ENCODE measurements at regions of chr1 and their contacts with region 1.

Region 1: GRCh38 chr1:200802865-200803512 is 64.3 kb downstream of the CAMSAP2 start:
- DNase-seq: peak; percentile 34 to 75 (median 61)
- ATAC-seq: peak; percentile 93
- H3K4me3 ChIP-seq: no peak overlapping the region
- H3K4me3 Mint-ChIP-seq: no peak overlapping the region
- H3K27ac ChIP-seq: no peak overlapping the region
- H3K27ac Mint-ChIP-seq: peak overlapping the region in 1 of 9 donors; percentile 10
- H3K4me1 ChIP-seq: no peaks in the 10 kb centered on the region
- H3K4me1 Mint-ChIP-seq: peaks cover 0 to 10% (median 4%) of the 10 kb centered on the region in 7 donors
- H3K27me3 ChIP-seq: no peaks in the 10 kb centered on the region
- H3K27me3 Mint-ChIP-seq: peaks cover 0 to 31% (median 0%) of the 10 kb centered on the region in 5 donors

Region 2: DNA sequence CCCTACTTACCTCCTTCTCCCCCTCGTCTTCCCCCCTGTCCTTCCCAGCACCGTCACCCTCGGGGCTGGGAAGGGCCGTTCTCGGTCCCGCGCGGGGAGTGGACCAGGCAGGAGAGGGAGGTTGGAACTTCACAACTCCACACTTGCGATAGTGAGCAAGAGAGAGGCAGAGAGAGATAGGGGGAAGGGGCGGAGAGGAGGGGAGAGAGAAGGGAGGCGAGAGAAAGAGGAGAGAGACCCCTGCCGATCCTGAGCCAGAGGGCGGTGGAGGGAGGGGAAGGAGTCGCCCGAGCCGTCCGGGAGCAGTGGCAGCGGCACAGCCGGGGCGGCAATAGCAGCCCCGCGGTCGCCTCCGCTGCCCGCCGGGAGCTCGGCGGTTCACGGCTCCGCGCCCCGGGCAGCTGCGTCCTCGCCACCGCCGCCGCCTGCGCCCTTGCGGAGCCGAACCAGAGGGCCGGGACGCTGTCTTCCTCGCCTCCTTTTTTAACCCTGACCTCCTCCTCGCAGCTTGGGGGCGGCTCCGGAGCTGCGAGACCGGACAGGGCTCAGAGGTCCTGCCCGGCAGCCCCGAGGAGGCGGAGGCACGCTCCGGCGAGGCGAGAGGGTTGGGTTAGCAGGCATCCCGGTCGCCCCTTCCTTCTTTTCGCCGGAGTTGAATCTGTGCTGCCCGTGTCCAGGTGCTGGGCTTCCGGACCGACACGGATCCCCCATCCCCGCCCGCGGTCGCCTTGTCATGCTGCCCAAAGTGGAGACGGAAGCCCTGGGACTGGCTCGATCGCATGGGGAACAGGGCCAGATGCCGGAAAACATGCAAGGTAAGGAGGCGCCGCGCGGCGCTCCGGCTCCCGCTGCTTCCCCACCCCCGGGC is 763.8 kb before region 1 on chr1:
- CTCF ChIA-PET with region 1: no interaction called
- POLR2A ChIA-PET with region 1: no interaction called
- intact Hi-C with region 1: no loop called
- DNase-seq: peak in 1 of 9 donors; percentile 38
- ATAC-seq: peak; percentile 57
- H3K4me3 ChIP-seq: peak overlapping the region; percentile 46
- H3K4me3 Mint-ChIP-seq: peak overlapping the region in 9 of 10 donors; percentile 59 to 82 (median 70)
- H3K27ac ChIP-seq: no peak overlapping the region
- H3K27ac Mint-ChIP-seq: peak overlapping the region in 1 of 9 donors; percentile 69
- H3K4me1 ChIP-seq: peaks cover 4 to 24% of the 10 kb centered on the region in 2 donors
- H3K4me1 Mint-ChIP-seq: peaks cover 20 to 50% (median 38%) of the 10 kb centered on the region in 7 donors
- H3K27me3 ChIP-seq: peaks cover 9 to 39% of the 10 kb centered on the region in 2 donors
- H3K27me3 Mint-ChIP-seq: peaks cover 37 to 71% (median 44%) of the 10 kb centered on the region in 5 donors

Region 3: DNA sequence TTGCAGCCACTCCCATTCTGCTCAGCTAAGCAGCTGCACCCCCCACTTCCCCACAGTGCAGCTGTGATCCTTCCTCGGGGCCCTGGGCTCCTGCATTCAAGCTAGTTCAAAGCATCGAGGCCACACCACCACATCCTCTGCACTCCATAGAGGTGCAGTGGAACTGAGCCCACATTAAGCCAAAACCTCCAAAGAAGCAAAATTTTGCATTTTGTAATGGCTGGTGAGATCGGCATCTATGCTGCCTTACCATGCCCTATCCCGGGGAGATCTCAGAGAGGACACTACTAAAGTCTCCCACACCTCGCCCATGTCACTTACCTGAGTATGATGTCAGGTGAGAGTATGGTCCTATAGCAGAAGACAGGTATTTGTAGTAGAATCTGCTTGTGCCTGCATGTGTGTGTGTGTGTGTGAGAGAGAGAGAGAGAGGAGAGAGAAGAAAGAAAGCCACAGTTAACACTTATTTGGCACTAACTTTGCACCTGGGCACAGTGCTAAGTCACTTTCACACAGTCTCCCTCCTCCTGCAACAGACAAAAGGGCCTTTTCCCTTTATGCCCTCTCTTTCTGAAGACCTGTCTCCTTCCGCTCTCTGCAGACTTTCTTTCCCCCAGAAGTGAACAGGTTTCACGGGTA is 272.2 kb before region 1 on chr1:
- CTCF ChIA-PET with region 1: no interaction called
- POLR2A ChIA-PET with region 1: no interaction called
- intact Hi-C with region 1: loop called in 1 of 2 experiments (anchors 1 kb)
- DNase-seq: peak; percentile 22 to 87 (median 79)
- ATAC-seq: peak; percentile 97
- H3K4me3 ChIP-seq: peak overlapping the region; percentile 29
- H3K4me3 Mint-ChIP-seq: peak overlapping the region; percentile 41 to 86 (median 78)
- H3K27ac ChIP-seq: peak overlapping the region; percentile 62
- H3K27ac Mint-ChIP-seq: peak overlapping the region; percentile 71 to 92 (median 86)
- H3K4me1 ChIP-seq: peaks cover 16 to 34% of the 10 kb centered on the region in 2 donors
- H3K4me1 Mint-ChIP-seq: peaks cover 16 to 61% (median 53%) of the 10 kb centered on the region in 7 donors
- H3K27me3 ChIP-seq: no peaks in the 10 kb centered on the region
- H3K27me3 Mint-ChIP-seq: no peaks in the 10 kb centered on the region

Region 4: DNA sequence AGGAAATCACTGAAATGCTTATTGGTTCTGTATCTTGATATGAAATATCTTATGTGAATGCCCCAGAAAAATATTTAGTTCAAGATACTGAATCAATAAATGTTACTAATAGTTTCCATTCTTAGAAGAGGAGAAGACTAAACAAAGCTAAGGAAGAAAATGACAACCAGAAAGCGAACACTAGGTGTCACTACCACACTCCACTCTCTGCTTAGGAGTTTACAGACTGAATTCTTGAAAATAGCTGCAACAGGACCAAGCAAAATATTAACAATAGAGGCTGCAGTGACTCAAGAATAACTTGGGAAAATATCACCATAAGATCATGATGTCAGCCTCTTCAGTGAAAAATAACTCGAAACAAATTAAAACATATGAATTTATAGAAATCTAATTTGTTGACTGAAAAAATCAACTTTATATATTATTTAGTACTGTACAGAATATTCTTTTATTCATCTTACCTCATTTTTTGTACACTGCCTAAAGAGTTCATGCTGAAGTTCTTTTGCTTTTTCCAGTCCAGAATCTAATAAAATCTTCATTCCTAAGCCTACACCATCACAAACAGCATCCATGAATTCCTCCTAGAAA is 244.0 kb before region 1 on chr1:
- CTCF ChIA-PET with region 1: interaction called, 7 read pairs
- POLR2A ChIA-PET with region 1: interaction called, 3 read pairs
- intact Hi-C with region 1: loop called (anchors 1 kb)
- DNase-seq: peak in 4 of 9 donors; percentile 10 to 26 (median 18)
- ATAC-seq: peak; percentile 48
- H3K4me3 ChIP-seq: no peak overlapping the region
- H3K4me3 Mint-ChIP-seq: no peak overlapping the region
- H3K27ac ChIP-seq: no peak overlapping the region
- H3K27ac Mint-ChIP-seq: no peak overlapping the region
- H3K4me1 ChIP-seq: no peaks in the 10 kb centered on the region
- H3K4me1 Mint-ChIP-seq: peaks cover 0 to 17% (median 6%) of the 10 kb centered on the region in 7 donors
- H3K27me3 ChIP-seq: no peaks in the 10 kb centered on the region
- H3K27me3 Mint-ChIP-seq: no peaks in the 10 kb centered on the region

Region 5: DNA sequence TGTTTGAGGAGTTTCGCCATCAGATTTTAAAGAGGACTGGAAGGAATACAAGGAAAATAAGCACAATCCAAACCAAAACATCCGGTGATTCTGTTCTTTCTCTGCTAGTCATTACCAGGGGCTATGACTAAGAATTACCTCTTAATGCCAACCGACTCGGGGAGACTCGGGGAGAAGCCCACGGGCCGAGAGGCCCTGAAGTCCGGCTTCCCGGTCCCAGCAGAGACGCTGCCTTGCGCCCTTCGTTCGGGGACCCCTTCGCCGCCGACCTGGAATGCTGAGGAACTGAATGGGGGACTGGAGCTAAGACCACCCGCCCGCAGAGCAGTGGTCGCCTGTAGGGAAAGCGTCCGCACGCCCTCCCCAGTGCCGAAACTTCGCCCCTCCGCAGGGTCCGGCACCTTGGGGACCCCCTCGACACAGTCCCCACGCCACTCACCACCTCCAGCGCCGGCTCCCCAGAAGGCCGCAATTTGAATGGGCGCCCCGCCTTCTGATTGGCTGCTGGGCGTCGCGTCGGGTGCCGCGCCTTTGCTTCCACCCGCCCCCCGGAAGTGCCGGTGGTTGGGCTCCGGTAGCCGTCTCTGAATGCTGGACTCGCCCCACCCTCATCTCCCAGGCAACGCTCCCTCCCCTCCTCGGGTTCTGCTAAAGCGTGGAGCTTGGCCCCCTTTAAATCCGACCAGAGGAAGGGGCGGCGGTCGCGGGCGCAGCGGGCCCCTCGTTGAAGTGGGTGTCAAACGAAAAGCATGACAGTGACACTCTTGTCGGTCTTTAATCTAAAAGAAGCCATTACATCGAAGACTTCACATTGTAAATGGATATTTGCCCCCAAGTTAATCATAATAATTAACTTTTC is 182.5 kb before region 1 on chr1 and contains the start of gene KIF14:
- CTCF ChIA-PET with region 1: interaction called, 81 read pairs
- POLR2A ChIA-PET with region 1: no interaction called
- intact Hi-C with region 1: loop called in 1 of 2 experiments (anchors 1 kb)
- DNase-seq: peak; percentile 81 to 94 (median 89)
- ATAC-seq: peak; percentile 99
- H3K4me3 ChIP-seq: peak within 1 kb of the TSS; percentile 58
- H3K4me3 Mint-ChIP-seq: peak within 1 kb of the TSS; percentile 86 to 99 (median 96)
- H3K27ac ChIP-seq: peak within 1 kb of the TSS; percentile 67
- H3K27ac Mint-ChIP-seq: peak within 1 kb of the TSS; percentile 74 to 96 (median 93)
- H3K4me1 ChIP-seq: peaks cover 6% of the 10 kb centered on the region in 2 donors
- H3K4me1 Mint-ChIP-seq: peaks cover 0 to 56% (median 15%) of the 10 kb centered on the region in 7 donors
- H3K27me3 ChIP-seq: peaks cover 0 to 4% of the 10 kb centered on the region in 2 donors
- H3K27me3 Mint-ChIP-seq: no peaks in the 10 kb centered on the region
- total RNA-seq, gene KIF14: 0.16 to 16.2 (median 0.42) TPM in 3 of 5 experiments, not detected in the others

Region 6: DNA sequence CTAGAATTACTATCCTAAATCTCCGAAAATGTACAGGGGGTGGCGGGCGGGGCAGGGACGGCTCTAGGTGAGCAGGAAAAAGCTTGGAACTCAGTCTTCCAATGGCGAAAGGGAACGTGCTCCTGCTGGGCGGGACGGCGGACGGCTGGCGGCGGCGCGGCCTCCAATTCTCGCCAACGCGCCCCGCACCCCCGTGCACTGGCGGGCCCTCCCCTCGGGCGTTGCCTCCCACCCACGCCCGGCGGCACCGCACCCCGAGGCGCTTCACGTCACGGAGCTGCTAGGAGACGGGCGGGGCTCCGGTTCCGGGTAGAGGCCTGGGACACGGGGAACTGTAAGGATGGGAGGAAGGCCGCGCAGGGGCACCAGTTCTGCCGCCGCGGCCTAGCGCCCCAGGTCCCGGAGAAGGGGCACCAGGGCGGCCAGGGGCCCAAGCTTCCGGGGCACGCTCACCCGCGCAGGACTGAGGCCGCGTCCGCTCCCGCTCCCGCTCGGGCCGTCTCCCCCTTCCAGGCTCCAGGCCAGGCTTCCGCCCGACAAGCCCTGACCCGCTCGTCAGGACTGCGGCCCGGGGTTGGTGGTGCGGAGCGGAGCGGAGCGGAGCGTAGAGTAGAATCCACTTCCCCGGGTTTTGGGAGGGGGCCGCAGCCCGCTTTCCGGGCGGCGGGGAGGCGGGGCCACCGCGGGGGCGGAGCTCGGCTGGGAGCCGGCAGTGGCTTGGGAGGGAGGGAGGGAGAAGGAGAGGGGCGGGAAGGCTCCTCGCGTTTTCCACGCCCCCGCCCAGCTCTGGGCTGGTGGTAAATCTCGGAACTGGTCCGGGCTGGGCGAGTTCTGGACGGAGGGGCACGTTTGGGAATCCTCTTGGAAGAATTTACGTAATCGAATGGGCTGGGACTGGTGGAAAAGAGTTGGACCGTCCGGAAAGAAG is 133.4 kb before region 1 on chr1 and contains the start of gene DDX59:
- CTCF ChIA-PET with region 1: interaction called, 6 read pairs
- POLR2A ChIA-PET with region 1: interaction called, 4 read pairs
- intact Hi-C with region 1: loop called (anchors 1 to 2 kb)
- DNase-seq: peak; percentile 81 to 95 (median 85)
- ATAC-seq: peak; percentile 92
- H3K4me3 ChIP-seq: peak within 1 kb of the TSS; percentile 93
- H3K4me3 Mint-ChIP-seq: peak within 1 kb of the TSS; percentile 96 to 99 (median 98)
- H3K27ac ChIP-seq: peak within 1 kb of the TSS; percentile 98
- H3K27ac Mint-ChIP-seq: peak within 1 kb of the TSS; percentile 89 to 99 (median 97)
- H3K4me1 ChIP-seq: peaks cover 13 to 16% of the 10 kb centered on the region in 2 donors
- H3K4me1 Mint-ChIP-seq: peaks cover 20 to 60% (median 51%) of the 10 kb centered on the region in 7 donors
- H3K27me3 ChIP-seq: no peaks in the 10 kb centered on the region
- H3K27me3 Mint-ChIP-seq: no peaks in the 10 kb centered on the region
- total RNA-seq, gene DDX59: 20.6 to 41.3 (median 31.1) TPM

Region 7: DNA sequence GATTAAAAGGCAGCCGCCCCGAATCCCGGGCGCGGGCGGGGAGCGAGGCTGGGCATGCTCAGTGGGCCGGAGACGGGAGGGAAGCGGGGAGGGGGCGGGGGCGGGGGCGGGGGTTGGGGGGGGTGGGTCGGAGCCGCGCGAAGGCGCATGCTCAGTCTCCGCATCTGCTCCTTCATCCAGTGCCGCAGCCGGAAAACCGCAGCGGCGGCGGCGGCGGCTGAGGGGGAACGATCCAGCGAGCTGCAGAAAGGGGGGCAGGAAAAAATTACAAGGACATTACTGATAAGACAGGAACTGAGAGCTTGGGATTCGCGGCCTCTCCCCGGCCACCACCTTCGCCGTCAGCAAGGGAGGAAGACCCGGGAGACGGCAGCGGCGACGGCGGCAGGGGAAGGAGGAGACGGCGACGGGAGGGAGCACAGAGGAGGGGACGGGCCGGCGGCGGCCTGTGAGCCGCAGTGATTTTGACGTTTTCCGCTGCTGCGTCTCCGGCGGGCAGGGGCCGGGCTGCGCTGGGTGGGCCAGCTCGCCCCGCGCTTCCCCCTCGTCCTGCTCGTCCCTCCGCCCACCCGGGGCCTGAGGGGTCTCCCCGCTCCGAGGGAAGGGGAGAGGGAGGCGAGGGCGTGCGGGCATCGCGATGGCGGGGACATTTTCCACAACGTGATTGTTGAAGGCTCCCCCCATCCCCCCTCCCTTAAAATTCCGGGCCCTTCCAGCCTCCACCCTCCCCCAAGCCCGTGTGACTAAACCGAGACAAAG is 64.1 kb before region 1 on chr1 and contains the start of gene CAMSAP2:
- CTCF ChIA-PET with region 1: interaction called, 3 read pairs
- POLR2A ChIA-PET with region 1: no interaction called
- intact Hi-C with region 1: loop called in 1 of 2 experiments (anchors 2 kb)
- DNase-seq: peak; percentile 43 to 76 (median 69)
- ATAC-seq: peak; percentile 80
- H3K4me3 ChIP-seq: peak within 1 kb of the TSS; percentile 74
- H3K4me3 Mint-ChIP-seq: peak within 1 kb of the TSS; percentile 85 to 99 (median 98)
- H3K27ac ChIP-seq: peak within 1 kb of the TSS; percentile 75
- H3K27ac Mint-ChIP-seq: peak within 1 kb of the TSS; percentile 78 to 97 (median 93)
- H3K4me1 ChIP-seq: peaks cover 5 to 23% of the 10 kb centered on the region in 2 donors
- H3K4me1 Mint-ChIP-seq: peaks cover 16 to 49% (median 41%) of the 10 kb centered on the region in 7 donors
- H3K27me3 ChIP-seq: no peaks in the 10 kb centered on the region
- H3K27me3 Mint-ChIP-seq: peaks cover 0 to 45% (median 0%) of the 10 kb centered on the region in 5 donors
- total RNA-seq, gene CAMSAP2: 0.36 to 11.4 (median 5.5) TPM

Region 8: DNA sequence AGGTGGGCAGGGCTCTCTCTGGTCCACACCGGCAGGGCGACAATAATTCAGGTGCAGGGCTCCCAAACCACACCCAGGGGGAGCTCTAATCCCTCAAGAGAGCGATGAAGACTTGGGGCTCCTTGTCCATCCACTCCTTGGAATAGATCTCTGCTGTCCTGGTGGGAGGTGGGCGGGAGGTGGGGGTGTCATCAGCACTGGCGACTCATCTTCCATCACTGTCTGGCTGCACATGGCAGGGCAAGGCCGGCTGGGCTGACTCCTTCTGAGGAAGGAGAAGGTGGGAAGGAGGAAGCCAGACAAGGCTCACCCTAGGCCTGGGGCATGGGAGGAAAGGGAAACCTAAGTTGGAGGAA is 545.2 kb after region 1 on chr1:
- CTCF ChIA-PET with region 1: no interaction called
- POLR2A ChIA-PET with region 1: no interaction called
- intact Hi-C with region 1: no loop called
- DNase-seq: no peak
- ATAC-seq: no peak
- H3K4me3 ChIP-seq: no peak overlapping the region
- H3K4me3 Mint-ChIP-seq: no peak overlapping the region
- H3K27ac ChIP-seq: no peak overlapping the region
- H3K27ac Mint-ChIP-seq: no peak overlapping the region
- H3K4me1 ChIP-seq: no peaks in the 10 kb centered on the region
- H3K4me1 Mint-ChIP-seq: no peaks in the 10 kb centered on the region
- H3K27me3 ChIP-seq: no peaks in the 10 kb centered on the region
- H3K27me3 Mint-ChIP-seq: peaks cover 5 to 50% (median 19%) of the 10 kb centered on the region in 5 donors